CD4-positive, alpha-beta T cell (primary cell): ENCODE measurements at regions of chr16 and their contacts with region 1.

Region 1: GRCh38 chr16:71564155-71564967 is 12.5 kb downstream of the TAT start:
- DNase-seq: peak in 1 of 14 experiments; percentile 0
- ATAC-seq: no peak
- H3K4me3 ChIP-seq: peak overlapping the region; percentile 67
- H3K4me3 Mint-ChIP-seq: peak overlapping the region; percentile 96
- H3K27ac ChIP-seq: peak overlapping the region; percentile 62 to 75
- H3K27ac Mint-ChIP-seq: peak overlapping the region; percentile 99
- H3K4me1 ChIP-seq: peaks cover 20% of the 10 kb centered on the region
- H3K4me1 Mint-ChIP-seq: peaks cover 22% of the 10 kb centered on the region
- H3K27me3 ChIP-seq: no peaks in the 10 kb centered on the region
- H3K27me3 Mint-ChIP-seq: no peaks in the 10 kb centered on the region
- CTCF ChIP-seq: no peak

Region 2: GRCh38 chr16:70800781-70801530 is 763.4 kb before region 1 on chr16 and contains the start of gene VAC14:
- CTCF ChIA-PET with region 1: no interaction called
- POLR2A ChIA-PET with region 1: no interaction called
- intact Hi-C with region 1: loop called in 1 of 2 experiments (anchors 5 kb)
- DNase-seq: peak; percentile 95 to 99 (median 98)
- ATAC-seq: peak; percentile 98
- H3K4me3 ChIP-seq: peak within 1 kb of the TSS; percentile 85
- H3K4me3 Mint-ChIP-seq: peak within 1 kb of the TSS; percentile 95
- H3K27ac ChIP-seq: peak within 1 kb of the TSS; percentile 53 to 61
- H3K27ac Mint-ChIP-seq: peak within 1 kb of the TSS; percentile 90
- H3K4me1 ChIP-seq: peaks cover 17% of the 10 kb centered on the region
- H3K4me1 Mint-ChIP-seq: peaks cover 35% of the 10 kb centered on the region
- H3K27me3 ChIP-seq: no peaks in the 10 kb centered on the region
- H3K27me3 Mint-ChIP-seq: no peaks in the 10 kb centered on the region
- CTCF ChIP-seq: no peak
- total RNA-seq, gene VAC14: 23.0 to 23.6 TPM

Region 3: DNA sequence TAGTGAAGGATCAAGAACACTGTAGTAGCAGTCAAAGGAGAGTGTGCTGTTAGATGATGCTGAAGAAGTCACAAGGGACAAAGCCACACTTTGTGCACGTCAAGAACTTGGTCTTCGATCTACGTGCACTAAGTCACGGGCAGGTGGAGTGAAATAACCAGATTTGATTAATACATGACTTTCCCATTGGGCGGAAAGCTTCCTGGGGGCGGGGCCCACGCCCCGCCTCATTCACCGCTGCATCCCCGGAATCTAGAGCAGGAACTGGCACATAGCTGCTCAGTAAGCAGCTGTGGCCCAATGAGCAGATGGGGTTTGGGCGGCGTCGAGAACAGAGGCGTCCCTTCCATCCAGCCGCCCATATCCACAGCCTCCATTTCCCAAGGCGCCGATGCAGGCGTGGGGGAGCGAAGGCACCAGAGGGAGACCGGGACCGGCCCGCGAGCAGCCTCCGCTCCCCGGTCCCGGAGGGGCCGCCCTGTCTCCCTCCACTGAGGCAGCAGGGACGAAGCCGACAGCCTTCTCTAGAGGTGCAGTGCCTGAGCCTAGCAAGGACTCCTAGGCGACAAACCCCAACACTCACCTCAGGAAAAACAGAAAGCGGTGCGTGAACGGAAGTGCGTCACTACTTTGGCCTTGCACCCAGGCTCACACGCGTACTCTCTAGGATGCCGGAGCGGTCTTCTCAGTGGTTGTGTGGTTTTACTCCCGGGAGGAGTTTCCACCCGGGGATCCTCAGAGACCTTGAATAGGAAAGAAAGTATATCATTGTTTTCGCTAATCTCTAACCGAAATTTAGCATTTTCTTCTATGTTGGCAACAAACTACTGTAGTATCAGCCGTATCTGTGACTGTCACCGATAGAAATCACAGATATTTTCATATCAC is 80.1 kb before region 1 on chr16:
- CTCF ChIA-PET with region 1: interaction called, 3 read pairs
- POLR2A ChIA-PET with region 1: interaction called, 12 read pairs
- intact Hi-C with region 1: loop called (anchors 1 to 5 kb)
- DNase-seq: peak; percentile 64 to 95 (median 76)
- ATAC-seq: peak; percentile 84
- H3K4me3 ChIP-seq: peak overlapping the region; percentile 94
- H3K4me3 Mint-ChIP-seq: peak overlapping the region; percentile 85
- H3K27ac ChIP-seq: peak overlapping the region; percentile 93 to 99
- H3K27ac Mint-ChIP-seq: peak overlapping the region; percentile 89
- H3K4me1 ChIP-seq: peaks cover 14% of the 10 kb centered on the region
- H3K4me1 Mint-ChIP-seq: peaks cover 15% of the 10 kb centered on the region
- H3K27me3 ChIP-seq: no peaks in the 10 kb centered on the region
- H3K27me3 Mint-ChIP-seq: no peaks in the 10 kb centered on the region
- CTCF ChIP-seq: no peak

Region 4: GRCh38 chr16:71723537-71724319 is 159.4 kb after region 1 on chr16:
- CTCF ChIA-PET with region 1: interaction called, 4 read pairs
- POLR2A ChIA-PET with region 1: interaction called, 3 read pairs
- intact Hi-C with region 1: loop called (anchors 10 kb)
- DNase-seq: peak; percentile 59 to 93 (median 78)
- ATAC-seq: peak; percentile 81
- H3K4me3 ChIP-seq: peak overlapping the region; percentile 84
- H3K4me3 Mint-ChIP-seq: peak overlapping the region; percentile 92
- H3K27ac ChIP-seq: no peak overlapping the region
- H3K27ac Mint-ChIP-seq: peak overlapping the region; percentile 74
- H3K4me1 ChIP-seq: peaks cover 11% of the 10 kb centered on the region
- H3K4me1 Mint-ChIP-seq: peaks cover 18% of the 10 kb centered on the region
- H3K27me3 ChIP-seq: no peaks in the 10 kb centered on the region
- H3K27me3 Mint-ChIP-seq: no peaks in the 10 kb centered on the region
- CTCF ChIP-seq: no peak

Region 5: GRCh38 chr16:71889147-71889546 is 324.8 kb after region 1 on chr16:
- CTCF ChIA-PET with region 1: no interaction called
- POLR2A ChIA-PET with region 1: no interaction called
- intact Hi-C with region 1: loop called in 1 of 2 experiments (anchors 2 kb)
- DNase-seq: no peak
- ATAC-seq: no peak
- H3K4me3 ChIP-seq: no peak overlapping the region
- H3K4me3 Mint-ChIP-seq: no peak overlapping the region
- H3K27ac ChIP-seq: no peak overlapping the region
- H3K27ac Mint-ChIP-seq: no peak overlapping the region
- H3K4me1 ChIP-seq: peaks cover 17% of the 10 kb centered on the region
- H3K4me1 Mint-ChIP-seq: peaks cover 20% of the 10 kb centered on the region
- H3K27me3 ChIP-seq: no peaks in the 10 kb centered on the region
- H3K27me3 Mint-ChIP-seq: no peaks in the 10 kb centered on the region
- CTCF ChIP-seq: no peak

Region 6: DNA sequence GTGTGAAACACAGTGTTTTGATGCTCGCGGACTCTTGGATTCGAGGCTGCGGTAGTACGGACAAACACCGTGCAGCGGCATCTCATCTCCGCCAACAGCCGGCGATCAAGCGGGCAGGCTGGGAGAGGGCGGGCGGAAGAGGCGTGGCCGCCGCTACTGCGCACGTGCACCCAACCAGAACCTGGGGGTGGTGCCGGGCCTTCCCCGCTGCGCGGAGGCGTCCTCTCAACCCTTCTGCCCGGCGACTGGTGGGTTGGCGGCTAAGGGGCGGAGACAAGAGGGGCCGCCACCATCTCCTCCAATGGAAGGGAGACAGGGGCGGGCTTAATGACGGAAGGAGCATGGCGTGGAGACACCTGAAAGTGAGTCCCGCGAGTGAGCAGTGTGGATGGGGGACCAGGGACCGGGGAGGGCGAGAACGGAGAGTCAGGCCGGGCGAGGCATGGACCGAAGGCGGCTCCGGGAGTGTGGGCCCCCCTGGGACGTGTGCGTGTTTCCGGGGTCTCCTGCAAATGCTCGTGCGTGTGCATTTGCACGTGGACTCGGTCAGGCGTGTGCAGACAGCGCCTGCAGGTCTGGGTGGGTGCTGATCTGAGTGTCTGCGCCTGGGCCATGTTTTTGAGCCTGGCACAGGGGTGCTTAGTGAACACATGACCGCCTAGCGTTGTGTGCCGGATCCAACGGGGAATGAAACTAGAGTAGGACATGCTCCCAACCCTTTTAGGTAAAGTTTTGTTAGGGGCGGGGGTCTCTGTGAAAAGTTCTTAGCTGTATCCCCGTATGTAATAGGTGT is 444.3 kb after region 1 on chr16 and contains the start of gene DHODH:
- CTCF ChIA-PET with region 1: no interaction called
- POLR2A ChIA-PET with region 1: no interaction called
- intact Hi-C with region 1: loop called in 1 of 2 experiments (anchors 5 kb)
- DNase-seq: peak; percentile 94 to 99 (median 97)
- ATAC-seq: peak; percentile 99
- H3K4me3 ChIP-seq: peak within 1 kb of the TSS; percentile 99
- H3K4me3 Mint-ChIP-seq: peak within 1 kb of the TSS; percentile 96
- H3K27ac ChIP-seq: peak within 1 kb of the TSS; percentile 29 to 58
- H3K27ac Mint-ChIP-seq: peak within 1 kb of the TSS; percentile 73
- H3K4me1 ChIP-seq: peaks cover 19% of the 10 kb centered on the region
- H3K4me1 Mint-ChIP-seq: peaks cover 12% of the 10 kb centered on the region
- H3K27me3 ChIP-seq: no peaks in the 10 kb centered on the region
- H3K27me3 Mint-ChIP-seq: no peaks in the 10 kb centered on the region
- CTCF ChIP-seq: no peak
- total RNA-seq, gene DHODH: 2.5 to 2.7 TPM

Region 7: GRCh38 chr16:72664509-72665225 is 1100.3 kb after region 1 on chr16:
- CTCF ChIA-PET with region 1: no interaction called
- POLR2A ChIA-PET with region 1: no interaction called
- intact Hi-C with region 1: loop called in 1 of 2 experiments (anchors 10 kb)
- DNase-seq: peak; percentile 84 to 98 (median 90)
- ATAC-seq: peak; percentile 99
- H3K4me3 ChIP-seq: peak overlapping the region; percentile 77
- H3K4me3 Mint-ChIP-seq: peak overlapping the region; percentile 98
- H3K27ac ChIP-seq: peak overlapping the region; percentile 54 to 59
- H3K27ac Mint-ChIP-seq: peak overlapping the region; percentile 85
- H3K4me1 ChIP-seq: peaks cover 9% of the 10 kb centered on the region
- H3K4me1 Mint-ChIP-seq: peaks cover 15% of the 10 kb centered on the region
- H3K27me3 ChIP-seq: no peaks in the 10 kb centered on the region
- H3K27me3 Mint-ChIP-seq: no peaks in the 10 kb centered on the region
- CTCF ChIP-seq: no peak